Activated naive CD8-positive, alpha-beta T cell treated with anti-CD3 and anti-CD28 coated beads, Interleukin-2, amount 10 ng/mL, durations not matched to agents 7 days and 5 days (primary cell): ENCODE measurements at regions of chr20 and their contacts with region 1.

Region 1: DNA sequence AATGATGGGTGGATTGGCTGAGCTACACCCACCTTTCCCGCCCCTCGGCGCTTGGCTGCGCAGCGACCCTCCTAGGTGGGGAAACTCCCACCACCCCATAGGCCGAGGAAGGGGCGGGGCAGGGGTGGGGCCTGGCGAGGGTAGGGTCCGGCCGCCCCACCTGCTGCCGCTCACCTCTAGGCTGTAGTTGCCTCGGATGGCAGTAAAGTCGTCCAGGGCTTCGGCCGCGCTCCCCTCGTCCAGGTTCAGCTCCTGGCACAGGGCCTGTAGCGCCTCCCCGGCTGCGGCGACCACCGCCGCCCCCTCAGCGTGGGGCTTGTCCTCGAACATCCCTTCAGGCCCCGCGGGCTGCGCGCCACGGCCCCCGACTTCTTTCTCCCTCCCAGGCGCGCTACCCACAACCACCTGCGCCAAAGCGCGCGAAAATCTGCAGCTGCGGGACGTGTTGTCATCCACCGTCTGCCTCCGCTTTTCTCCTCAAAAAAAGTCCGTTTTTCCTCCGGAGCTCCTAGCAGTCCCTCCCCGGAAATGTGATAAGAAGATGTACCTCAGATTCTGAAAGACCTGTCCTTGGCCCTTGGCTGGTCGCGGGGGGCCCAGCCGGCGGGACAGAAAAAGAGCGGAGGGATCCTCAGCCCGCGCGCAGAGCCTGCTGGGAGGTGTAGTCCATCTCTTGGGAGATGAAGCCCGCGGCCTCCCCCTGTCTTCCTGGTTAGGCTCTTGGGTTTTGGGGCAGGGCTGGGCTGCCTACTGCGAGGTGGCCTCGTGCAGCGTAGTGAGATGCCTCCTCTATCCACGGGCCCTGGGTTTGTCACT is at the start of gene RBL1:
- DNase-seq: peak; percentile 90
- ATAC-seq: peak; percentile 81
- H3K4me3 Mint-ChIP-seq: peak within 1 kb of the TSS; percentile 89
- H3K27ac Mint-ChIP-seq: peak within 1 kb of the TSS; percentile 100
- H3K4me1 Mint-ChIP-seq: peaks cover 35% of the 10 kb centered on the region
- H3K27me3 Mint-ChIP-seq: no peaks in the 10 kb centered on the region
- total RNA-seq, gene RBL1: 46.8 to 49.4 TPM

Region 2: DNA sequence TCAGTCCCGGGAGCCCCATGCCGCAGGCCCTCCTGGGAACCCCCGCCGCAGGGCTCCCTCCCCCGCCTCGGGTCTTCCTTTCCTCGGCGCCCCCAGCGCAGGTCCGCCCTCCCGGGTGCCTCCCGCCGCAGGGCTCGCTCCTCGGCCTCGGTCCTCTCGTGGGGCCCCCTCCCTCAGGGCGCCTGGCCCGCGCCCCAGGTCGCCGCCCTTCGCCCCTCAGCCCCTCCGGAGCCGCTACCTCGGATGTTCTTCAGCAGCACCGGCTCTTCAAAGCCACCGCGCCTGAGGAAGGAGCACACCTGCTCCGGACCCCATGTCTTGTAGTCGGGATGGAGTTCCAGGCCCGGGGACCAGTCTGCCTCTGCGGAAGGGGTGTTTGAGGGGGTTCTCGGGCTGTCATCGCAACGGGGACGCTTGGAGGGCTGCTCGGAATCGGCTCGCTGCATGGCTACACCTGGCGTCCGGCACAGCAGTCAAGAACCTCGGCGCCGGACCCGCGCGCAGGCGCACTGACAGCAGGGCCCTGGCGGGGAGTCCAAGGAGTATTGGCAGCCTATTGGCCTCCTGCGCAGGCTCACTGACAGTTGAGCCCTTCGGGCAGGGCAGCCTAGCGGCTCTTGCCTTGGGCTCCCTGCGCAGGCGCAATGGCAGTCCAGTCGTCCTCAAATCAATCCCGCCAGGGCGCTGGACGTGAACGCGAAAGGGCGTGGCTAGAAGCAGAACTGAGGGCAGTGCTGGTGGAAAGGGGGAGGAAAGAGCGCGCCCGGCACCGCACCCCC is 144.4 kb before region 1 on chr20 and contains the start of gene SAMHD1:
- POLR2A ChIA-PET with region 1: interaction called, 12 read pairs
- DNase-seq: peak; percentile 93
- ATAC-seq: peak; percentile 88
- H3K4me3 Mint-ChIP-seq: peak within 1 kb of the TSS; percentile 91
- H3K27ac Mint-ChIP-seq: peak within 1 kb of the TSS; percentile 91
- H3K4me1 Mint-ChIP-seq: peaks cover 28% of the 10 kb centered on the region
- H3K27me3 Mint-ChIP-seq: no peaks in the 10 kb centered on the region
- total RNA-seq, gene SAMHD1: 222 to 229 TPM

Region 3: DNA sequence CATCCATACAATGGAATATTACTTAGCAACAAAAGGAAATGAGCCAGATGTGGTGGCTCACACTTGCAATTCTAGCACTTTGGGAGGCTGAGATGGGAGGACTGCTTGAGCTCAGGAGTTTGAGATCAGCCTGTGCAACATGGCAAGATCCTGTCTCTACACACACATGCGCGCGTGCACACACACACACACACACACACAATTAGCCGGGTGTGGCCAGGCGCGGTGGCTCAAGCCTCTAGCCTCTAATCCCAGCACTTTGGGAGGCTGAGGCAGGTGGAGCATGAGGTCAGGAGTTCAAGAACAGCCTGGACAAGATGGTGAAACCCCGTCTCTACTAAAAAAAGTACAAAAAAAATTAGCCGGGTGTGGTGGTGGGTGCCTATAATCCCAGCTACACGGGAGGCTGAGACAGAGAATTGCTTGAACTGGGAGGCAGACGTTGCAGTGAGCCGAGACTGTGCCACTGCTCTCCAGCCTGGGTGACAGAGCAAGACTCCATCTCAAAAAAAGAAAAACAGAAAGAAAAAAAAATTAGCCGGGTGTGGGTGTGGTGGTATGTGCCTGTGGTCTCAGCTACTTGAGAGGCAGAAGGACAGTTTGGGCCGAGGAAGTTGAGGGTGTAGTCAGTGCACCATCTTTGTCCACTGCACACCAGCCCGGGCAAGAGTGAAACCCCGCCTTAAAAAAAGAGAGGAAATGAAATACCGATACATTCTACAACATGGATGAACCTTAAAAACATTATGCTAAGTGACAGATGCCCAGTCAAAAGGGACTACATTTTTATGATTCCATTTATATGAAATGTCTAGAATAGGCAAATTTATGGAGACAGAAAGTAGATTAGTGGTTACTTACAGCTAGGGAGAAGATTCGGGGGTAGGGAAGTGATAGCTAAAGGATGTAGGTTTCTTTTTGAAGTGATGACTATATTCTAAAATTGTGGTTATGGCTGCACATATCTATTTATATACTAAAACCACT is 52.5 kb before region 1 on chr20:
- POLR2A ChIA-PET with region 1: interaction called, 32 read pairs
- DNase-seq: peak; percentile 57
- ATAC-seq: peak; percentile 84
- H3K4me3 Mint-ChIP-seq: peak overlapping the region; percentile 88
- H3K27ac Mint-ChIP-seq: peak overlapping the region; percentile 99
- H3K4me1 Mint-ChIP-seq: peaks cover 34% of the 10 kb centered on the region
- H3K27me3 Mint-ChIP-seq: no peaks in the 10 kb centered on the region

Region 4: DNA sequence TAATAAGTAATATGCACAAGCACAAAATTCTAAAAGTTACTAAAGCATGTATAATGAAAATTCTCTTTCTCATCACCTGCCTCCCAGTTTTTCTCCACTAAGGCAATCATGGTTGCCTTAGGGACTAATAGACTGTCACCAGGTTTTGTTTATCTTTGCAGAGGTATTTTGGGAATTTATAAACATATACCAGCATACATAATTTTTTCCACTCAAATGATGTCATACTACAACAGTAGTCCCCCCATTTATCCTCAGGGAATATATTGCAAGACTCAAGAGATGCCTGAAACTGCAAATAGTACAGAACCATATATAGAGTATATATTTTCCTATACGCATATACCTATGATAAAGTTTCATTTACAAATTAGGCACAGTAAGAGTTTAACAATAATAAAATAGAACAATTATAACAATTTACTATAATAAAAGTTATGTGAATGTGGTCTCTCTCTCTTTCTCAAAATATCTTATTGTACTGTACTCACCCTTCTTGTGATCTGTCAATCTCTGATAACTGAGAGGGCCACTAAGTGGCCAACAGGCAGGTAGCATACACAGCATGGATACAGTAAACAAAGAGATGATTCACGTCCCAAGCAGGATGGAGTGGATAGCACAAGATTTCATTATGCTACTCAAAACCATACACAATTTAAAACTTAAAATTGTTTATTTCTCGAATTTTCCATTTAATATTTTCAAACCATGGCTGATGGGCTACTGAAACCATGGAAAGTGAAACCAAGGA is 19.7 kb before region 1 on chr20:
- POLR2A ChIA-PET with region 1: interaction called, 16 read pairs
- DNase-seq: no peak
- ATAC-seq: no peak
- H3K4me3 Mint-ChIP-seq: no peak overlapping the region
- H3K27ac Mint-ChIP-seq: no peak overlapping the region
- H3K4me1 Mint-ChIP-seq: peaks cover 35% of the 10 kb centered on the region
- H3K27me3 Mint-ChIP-seq: no peaks in the 10 kb centered on the region

Region 5: DNA sequence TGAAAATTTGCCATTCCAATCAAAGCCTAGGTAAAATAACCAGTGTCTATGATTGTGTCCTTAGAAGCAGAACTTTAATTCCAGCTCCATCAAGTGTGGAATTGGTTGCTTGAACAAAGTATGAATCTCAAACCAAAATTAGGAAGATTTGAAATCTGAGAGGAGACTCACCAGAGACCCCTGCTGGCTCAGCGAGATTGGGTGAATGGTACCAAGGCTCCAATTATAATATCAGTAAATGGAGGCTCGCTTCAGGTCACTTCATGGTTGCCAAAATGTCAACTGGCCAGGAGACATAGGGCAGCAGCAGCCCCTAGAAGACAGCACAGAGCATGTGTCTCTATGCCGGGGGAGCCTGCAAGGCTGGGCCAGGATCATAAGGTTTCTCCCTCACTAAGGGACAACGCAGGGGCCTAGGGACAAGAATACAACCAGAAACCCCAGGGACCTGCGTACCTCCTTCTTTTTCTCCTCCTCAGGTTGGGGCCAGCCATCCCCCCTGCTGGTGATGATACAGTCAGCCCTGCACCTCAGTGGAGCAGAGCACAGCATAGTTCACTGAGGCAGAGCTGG is 14.0 kb before region 1 on chr20:
- POLR2A ChIA-PET with region 1: interaction called, 16 read pairs
- DNase-seq: no peak
- ATAC-seq: peak; percentile 36
- H3K4me3 Mint-ChIP-seq: no peak overlapping the region
- H3K27ac Mint-ChIP-seq: peak overlapping the region; percentile 40
- H3K4me1 Mint-ChIP-seq: peaks cover 25% of the 10 kb centered on the region
- H3K27me3 Mint-ChIP-seq: no peaks in the 10 kb centered on the region

Region 6: DNA sequence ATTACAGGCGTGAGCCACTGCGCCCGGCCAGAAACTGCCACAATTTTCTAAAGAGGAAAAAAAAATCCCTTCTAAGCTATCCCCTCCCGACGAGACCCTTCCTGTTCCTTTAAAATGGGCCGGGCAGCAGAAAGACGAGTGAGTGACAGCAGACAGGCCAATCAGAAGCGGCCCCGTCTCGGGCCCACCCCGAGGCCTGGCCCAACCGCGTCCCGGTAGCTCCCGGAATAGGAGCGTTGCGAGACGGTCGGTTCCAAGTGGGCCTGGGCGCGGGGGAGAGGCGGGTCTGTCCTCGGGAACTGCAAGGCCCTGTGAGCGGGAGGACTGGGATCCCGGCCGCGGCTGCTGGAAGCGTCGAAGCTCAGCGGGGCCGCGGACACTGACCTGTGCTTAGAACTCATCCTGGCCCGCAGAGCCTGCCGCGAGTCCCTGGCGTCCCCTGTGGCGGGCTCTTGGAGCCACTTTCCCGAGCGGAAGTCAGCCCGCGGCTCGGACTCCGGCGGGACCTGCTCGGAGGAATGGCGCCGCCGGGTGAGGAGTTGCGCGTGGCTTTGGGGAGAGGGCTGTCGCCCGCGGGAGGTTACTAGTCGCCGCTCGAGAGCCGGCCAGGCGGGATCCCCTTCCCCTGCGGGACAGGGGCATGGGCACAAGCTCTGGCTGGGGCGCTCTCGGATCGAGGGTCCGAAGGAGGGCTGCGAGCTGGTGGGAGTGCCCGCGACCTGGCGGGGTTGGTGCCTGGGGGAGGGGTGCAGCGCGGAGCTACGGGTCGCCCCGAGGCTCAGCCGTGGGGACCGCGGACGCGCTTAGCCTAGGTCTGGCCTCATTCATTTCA is 83.2 kb after region 1 on chr20 and contains the starts of genes MROH8 and RPN2:
- POLR2A ChIA-PET with region 1: interaction called, 49 read pairs
- DNase-seq: peak; percentile 92
- ATAC-seq: peak; percentile 96
- H3K4me3 Mint-ChIP-seq: peak within 1 kb of the TSS; percentile 94
- H3K27ac Mint-ChIP-seq: peak within 1 kb of the TSS; percentile 95
- H3K4me1 Mint-ChIP-seq: peaks cover 24% of the 10 kb centered on the region
- H3K27me3 Mint-ChIP-seq: no peaks in the 10 kb centered on the region
- total RNA-seq, gene MROH8: 2.0 to 2.5 TPM
- total RNA-seq, gene RPN2: 126 to 135 TPM

Region 7: GRCh38 chr20:37378785-37379598 is 283.2 kb after region 1 on chr20:
- POLR2A ChIA-PET with region 1: no interaction called
- DNase-seq: no peak
- ATAC-seq: no peak
- H3K4me3 Mint-ChIP-seq: no peak overlapping the region
- H3K27ac Mint-ChIP-seq: no peak overlapping the region
- H3K4me1 Mint-ChIP-seq: peaks cover 5% of the 10 kb centered on the region
- H3K27me3 Mint-ChIP-seq: no peaks in the 10 kb centered on the region